Panc1 (cell line): ENCODE measurements at regions of chr16 and their contacts with region 1.

Region 1: DNA sequence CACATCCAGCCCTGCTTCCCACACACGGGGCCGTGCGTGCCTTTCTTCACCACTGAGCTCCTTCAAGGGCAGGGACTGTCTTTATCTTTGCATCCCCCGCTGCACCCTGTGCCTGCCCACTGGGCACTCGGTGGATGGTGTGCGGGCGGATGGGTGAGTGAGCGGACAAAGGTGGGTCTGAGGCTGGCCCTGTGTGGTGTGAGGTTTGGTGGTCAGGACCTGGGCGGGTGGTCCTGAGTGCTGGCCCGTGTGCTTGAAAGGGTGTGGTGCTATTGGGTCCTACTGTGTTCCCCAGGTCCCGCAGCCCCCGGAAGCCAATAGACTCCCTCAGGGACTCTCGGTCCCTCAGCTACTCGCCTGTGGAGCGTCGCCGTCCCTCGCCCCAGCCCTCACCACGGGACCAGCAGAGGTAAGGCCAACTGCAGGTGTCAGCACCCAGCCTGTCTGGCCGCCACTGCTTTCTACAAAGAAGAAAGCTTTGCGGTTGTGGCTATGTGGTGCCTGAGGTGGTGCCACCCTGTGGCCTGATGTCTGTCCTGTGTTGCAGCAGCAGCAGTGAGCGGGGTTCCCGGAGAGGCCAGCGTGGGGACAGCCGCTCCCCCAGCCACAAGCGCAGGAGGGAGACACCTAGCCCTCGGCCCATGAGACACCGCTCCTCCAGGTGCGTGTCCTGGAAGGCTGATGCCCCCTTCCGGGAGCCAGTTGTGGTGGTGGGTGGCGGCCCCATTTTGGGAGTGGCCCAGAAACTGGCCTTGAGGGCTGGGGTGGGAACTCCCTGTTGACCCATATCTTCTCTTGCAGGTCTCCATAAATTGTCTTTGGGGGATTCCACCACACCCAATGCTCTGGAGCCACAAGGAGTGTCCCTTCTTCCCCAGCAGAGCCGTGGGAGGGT is 6.8 kb downstream of the ELOB start:
- DNase-seq: no peak
- ATAC-seq: peak; percentile 54
- H3K4me3 ChIP-seq: no peak overlapping the region
- H3K27ac ChIP-seq: peak overlapping the region; percentile 98
- H3K4me1 ChIP-seq: peaks cover 84% of the 10 kb centered on the region
- H3K27me3 ChIP-seq: no peaks in the 10 kb centered on the region
- CTCF ChIP-seq: peak; percentile 83

Region 2: DNA sequence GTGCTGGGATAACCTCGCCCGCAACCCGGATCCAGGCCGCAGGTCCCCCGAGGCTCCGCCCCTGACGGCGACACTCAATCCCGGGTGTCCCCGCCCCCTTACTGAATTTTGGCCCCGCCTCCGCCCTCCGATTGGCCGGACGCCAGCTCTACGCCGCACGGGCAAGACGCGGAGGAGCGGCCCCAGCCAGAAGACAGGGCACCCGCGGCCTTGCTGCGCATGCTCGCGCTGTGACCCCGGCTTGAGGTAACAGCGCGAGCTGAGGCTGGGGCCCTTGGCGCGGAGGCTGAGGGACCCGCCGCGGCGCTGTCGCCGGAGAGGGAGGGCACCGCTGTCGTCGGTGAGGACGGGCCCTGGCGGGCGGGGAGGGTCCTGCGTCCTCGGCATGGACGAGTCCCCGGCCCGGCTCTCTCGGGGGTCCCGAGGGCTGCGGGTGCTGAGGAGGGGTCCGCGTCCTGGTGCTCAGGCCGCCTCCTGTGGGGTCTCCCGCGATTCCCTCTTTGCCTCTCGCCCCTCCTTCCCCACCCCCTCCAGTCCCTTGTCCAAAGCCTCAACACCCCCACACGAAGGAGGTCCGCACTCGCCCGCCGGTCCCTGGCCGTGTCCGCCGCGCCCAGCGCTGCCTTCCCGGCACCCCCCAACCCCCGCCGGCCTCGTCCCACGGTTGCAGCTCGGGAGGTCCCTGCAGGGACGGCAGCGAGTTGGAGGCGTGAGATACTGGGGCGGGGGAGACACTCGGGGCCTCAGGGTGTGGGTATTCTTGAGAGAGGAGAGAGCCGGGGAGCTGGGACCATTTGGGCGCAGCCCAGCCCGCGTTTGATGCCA is 112.9 kb after region 1 on chr16 and contains the start of gene FLYWCH2:
- CTCF ChIA-PET with region 1: no interaction called
- POLR2A ChIA-PET with region 1: interaction called, 15 read pairs
- in situ Hi-C with region 1: no loop called
- intact Hi-C with region 1: no loop called
- DNase-seq: peak; percentile 89
- ATAC-seq: peak; percentile 87
- H3K4me3 ChIP-seq: peak within 1 kb of the TSS; percentile 76 to 81
- H3K27ac ChIP-seq: peak within 1 kb of the TSS; percentile 84
- H3K4me1 ChIP-seq: peaks cover 3% of the 10 kb centered on the region; the same call in 1 of the 2 replicates
- H3K27me3 ChIP-seq: no peaks in the 10 kb centered on the region
- CTCF ChIP-seq: no peak
- total RNA-seq, gene FLYWCH2: 77.3 TPM